ENCODE measurements at regions of chrX and their contacts with region 1.

Region 1: DNA sequence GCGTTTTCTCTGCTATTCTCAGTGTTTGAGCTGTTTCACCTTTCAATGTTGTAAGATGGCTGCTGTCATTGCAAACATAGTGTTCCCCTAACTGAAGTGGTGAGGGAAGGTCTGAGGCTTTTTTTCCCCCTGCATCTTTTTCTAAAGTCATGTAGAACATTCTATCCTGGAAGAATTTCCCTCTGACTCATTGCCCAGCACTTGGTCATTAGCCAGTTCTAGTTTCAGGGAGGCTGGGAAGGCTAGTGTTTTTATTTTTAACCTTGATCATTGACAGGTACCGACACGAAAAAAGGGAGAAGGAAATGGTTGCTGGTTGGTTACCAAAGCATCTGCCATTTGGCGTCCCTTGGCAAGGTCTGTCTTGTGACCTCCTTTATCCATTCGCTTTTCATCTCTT is 6.6 kb downstream of the LANCL3 start:
- DNase-seq: no peak
- H3K4me3 ChIP-seq: no peak overlapping the region
- H3K27ac ChIP-seq: no peak overlapping the region
- H3K4me1 ChIP-seq: peaks cover 7% of the 10 kb centered on the region
- H3K27me3 ChIP-seq: no peaks in the 10 kb centered on the region
- CTCF ChIP-seq: no peak

Region 2: GRCh38 chrX:37302569-37302968 is 275.5 kb before region 1 on chrX:
- CTCF ChIA-PET with region 1: no interaction called
- POLR2A ChIA-PET with region 1: no interaction called
- intact Hi-C with region 1: loop called (anchors 2 kb)
- DNase-seq: peak in 1 of 2 experiments; percentile 29
- H3K4me3 ChIP-seq: no peak overlapping the region
- H3K27ac ChIP-seq: no peak overlapping the region
- H3K4me1 ChIP-seq: no peaks in the 10 kb centered on the region
- H3K27me3 ChIP-seq: no peaks in the 10 kb centered on the region
- CTCF ChIP-seq: peak; percentile 49

Region 3: DNA sequence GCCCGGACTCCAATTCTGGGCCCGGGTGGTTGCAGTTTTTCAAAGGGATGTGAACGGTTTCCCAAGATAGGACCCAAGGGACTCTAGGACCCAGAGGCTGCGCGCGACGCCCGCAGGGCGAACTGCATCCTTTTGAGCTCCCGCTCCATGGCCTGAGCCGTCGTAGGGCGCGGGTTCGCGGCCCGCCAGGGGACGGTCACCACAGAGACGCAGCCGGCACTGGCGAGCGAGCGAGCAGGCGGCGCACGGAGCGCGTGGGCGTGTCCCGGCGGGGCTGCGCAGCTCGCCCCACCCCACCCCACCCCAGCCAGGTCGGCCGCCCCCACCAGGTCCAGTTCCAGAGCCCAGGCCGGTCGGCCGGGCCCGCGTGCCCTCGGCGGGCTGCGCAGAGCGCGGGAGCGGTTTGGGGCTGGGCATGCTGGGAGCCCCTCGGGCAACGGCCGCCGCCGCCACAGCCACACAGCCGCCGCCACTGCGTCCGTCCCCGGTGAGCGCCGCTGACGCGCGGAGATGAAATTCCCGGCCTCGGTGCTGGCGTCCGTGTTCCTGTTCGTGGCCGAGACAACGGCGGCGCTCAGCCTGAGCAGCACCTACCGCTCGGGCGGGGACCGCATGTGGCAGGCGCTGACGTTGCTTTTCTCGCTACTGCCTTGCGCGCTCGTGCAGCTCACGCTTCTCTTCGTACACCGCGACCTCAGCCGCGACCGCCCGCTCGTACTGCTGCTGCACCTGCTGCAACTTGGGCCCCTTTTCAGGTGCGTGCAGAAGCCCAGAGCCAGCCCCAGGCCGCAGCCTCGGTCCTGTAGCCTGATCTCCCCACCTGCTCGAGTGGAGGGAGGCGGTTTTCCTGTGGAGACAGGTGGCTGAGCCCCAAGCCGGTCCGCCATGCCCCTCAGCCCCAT is 107.7 kb after region 1 on chrX and contains the start of gene XK:
- CTCF ChIA-PET with region 1: no interaction called
- POLR2A ChIA-PET with region 1: no interaction called
- intact Hi-C with region 1: loop called (anchors 5 kb)
- DNase-seq: peak; percentile 41 to 59
- H3K4me3 ChIP-seq: peak within 1 kb of the TSS; percentile 78
- H3K27ac ChIP-seq: peak within 1 kb of the TSS; percentile 55
- H3K4me1 ChIP-seq: peaks cover 21% of the 10 kb centered on the region
- H3K27me3 ChIP-seq: no peaks in the 10 kb centered on the region
- CTCF ChIP-seq: no peak
- total RNA-seq, gene XK: 2.4 and 3.7 TPM in 2 replicates

Region 4: GRCh38 chrX:37745354-37745753 is 167.3 kb after region 1 on chrX:
- CTCF ChIA-PET with region 1: no interaction called
- POLR2A ChIA-PET with region 1: no interaction called
- intact Hi-C with region 1: loop called (anchors 5 kb)
- DNase-seq: peak; percentile 54 to 56
- H3K4me3 ChIP-seq: no peak overlapping the region
- H3K27ac ChIP-seq: no peak overlapping the region
- H3K4me1 ChIP-seq: no peaks in the 10 kb centered on the region
- H3K27me3 ChIP-seq: no peaks in the 10 kb centered on the region
- CTCF ChIP-seq: peak; percentile 80

Region 5: GRCh38 chrX:37967714-37968113 is 389.7 kb after region 1 on chrX:
- CTCF ChIA-PET with region 1: no interaction called
- POLR2A ChIA-PET with region 1: no interaction called
- intact Hi-C with region 1: no loop called
- DNase-seq: no peak
- H3K4me3 ChIP-seq: no peak overlapping the region
- H3K27ac ChIP-seq: no peak overlapping the region
- H3K4me1 ChIP-seq: no peaks in the 10 kb centered on the region
- H3K27me3 ChIP-seq: no peaks in the 10 kb centered on the region
- CTCF ChIP-seq: no peak